MCF 10A (cell line): ENCODE measurements at regions of chr10 and their contacts with region 1.

Region 1: DNA sequence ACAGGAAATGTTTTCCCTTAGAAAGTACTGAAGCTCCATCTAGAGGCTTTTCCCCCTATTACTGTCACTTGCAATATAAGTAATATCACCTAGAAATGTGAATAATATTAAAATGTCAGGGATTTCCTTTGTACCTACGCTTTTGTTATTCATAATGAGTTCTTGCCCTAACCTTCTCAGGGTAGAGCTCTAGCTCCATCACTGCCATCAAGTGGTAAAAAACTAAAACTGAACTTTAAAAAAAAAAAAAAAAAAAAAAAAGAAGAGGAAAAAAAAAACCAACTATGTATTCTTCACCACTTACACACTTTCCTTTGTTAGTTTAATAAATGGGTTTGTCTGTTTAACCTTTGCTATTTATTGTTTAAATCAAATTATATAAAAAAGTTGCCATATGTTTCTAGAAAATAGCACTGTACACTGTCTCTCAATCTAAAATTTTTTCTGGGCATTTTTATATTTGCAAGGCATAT is 49.9 kb downstream of the DNAJC1 start:
- DNase-seq: peak; percentile 71
- H3K4me3 Mint-ChIP-seq: no peak overlapping the region
- H3K27ac Mint-ChIP-seq: no peak overlapping the region
- H3K4me1 Mint-ChIP-seq: no peaks in the 10 kb centered on the region
- H3K27me3 Mint-ChIP-seq: no peaks in the 10 kb centered on the region
- CTCF ChIP-seq: peak; percentile 40

Region 2: GRCh38 chr10:21552638-21553037 is 401.0 kb before region 1 on chr10:
- CTCF ChIA-PET with region 1: interaction called, 3 read pairs
- POLR2A ChIA-PET with region 1: no interaction called
- intact Hi-C with region 1: loop called (anchors 5 kb)
- DNase-seq: no peak
- H3K4me3 Mint-ChIP-seq: no peak overlapping the region
- H3K27ac Mint-ChIP-seq: peak overlapping the region; percentile 67
- H3K4me1 Mint-ChIP-seq: peaks cover 21% of the 10 kb centered on the region
- H3K27me3 Mint-ChIP-seq: no peaks in the 10 kb centered on the region
- CTCF ChIP-seq: no peak

Region 3: GRCh38 chr10:21624951-21625350 is 328.7 kb before region 1 on chr10:
- CTCF ChIA-PET with region 1: no interaction called
- POLR2A ChIA-PET with region 1: no interaction called
- intact Hi-C with region 1: no loop called
- DNase-seq: no peak
- H3K4me3 Mint-ChIP-seq: no peak overlapping the region
- H3K27ac Mint-ChIP-seq: peak overlapping the region; percentile 43
- H3K4me1 Mint-ChIP-seq: peaks cover 10% of the 10 kb centered on the region
- H3K27me3 Mint-ChIP-seq: no peaks in the 10 kb centered on the region
- CTCF ChIP-seq: no peak

Region 4: GRCh38 chr10:21740989-21741388 is 212.6 kb before region 1 on chr10:
- CTCF ChIA-PET with region 1: no interaction called
- POLR2A ChIA-PET with region 1: no interaction called
- intact Hi-C with region 1: loop called (anchors 5 kb)
- DNase-seq: no peak
- H3K4me3 Mint-ChIP-seq: no peak overlapping the region
- H3K27ac Mint-ChIP-seq: no peak overlapping the region
- H3K4me1 Mint-ChIP-seq: peaks cover 8% of the 10 kb centered on the region
- H3K27me3 Mint-ChIP-seq: no peaks in the 10 kb centered on the region
- CTCF ChIP-seq: no peak